ENCODE measurements at regions of chr15 and their contacts with region 1.

Region 1: DNA sequence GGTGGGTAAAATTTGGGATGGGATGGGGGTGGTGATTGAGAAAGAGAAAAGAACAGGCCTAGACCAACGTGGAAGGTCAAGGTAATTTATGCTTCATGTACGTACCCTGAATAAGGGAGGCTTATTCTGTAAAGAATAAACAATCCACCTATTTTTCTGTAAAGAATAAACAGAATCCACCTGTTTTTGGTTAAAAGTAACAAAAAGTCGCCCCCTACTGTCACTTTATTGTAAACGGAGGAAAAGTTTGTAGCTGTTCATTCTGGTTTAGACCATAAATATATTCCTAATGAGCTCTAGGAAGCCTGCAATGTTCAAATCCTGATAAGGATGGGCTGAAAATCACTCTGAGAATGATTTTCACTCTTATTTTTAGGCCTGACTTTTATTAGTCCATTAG is 23.5 kb upstream of the SQOR start:
- DNase-seq: no peak
- ATAC-seq: no peak
- H3K4me3 Mint-ChIP-seq: no peak overlapping the region
- H3K27ac Mint-ChIP-seq: no peak overlapping the region
- H3K4me1 Mint-ChIP-seq: peaks cover 9% of the 10 kb centered on the region
- H3K27me3 Mint-ChIP-seq: no peaks in the 10 kb centered on the region

Region 2: GRCh38 chr15:45429974-45430792 is 181.1 kb before region 1 on chr15:
- CTCF ChIA-PET with region 1: interaction called, 10 read pairs
- POLR2A ChIA-PET with region 1: no interaction called
- intact Hi-C with region 1: loop called in 1 of 2 experiments (anchors 1 kb)
- DNase-seq: peak; percentile 92
- ATAC-seq: peak; percentile 97
- H3K4me3 Mint-ChIP-seq: peak overlapping the region; percentile 56
- H3K27ac Mint-ChIP-seq: no peak overlapping the region
- H3K4me1 Mint-ChIP-seq: peaks cover 2% of the 10 kb centered on the region
- H3K27me3 Mint-ChIP-seq: peaks cover 7% of the 10 kb centered on the region

Region 3: GRCh38 chr15:45522328-45523160 is 88.8 kb before region 1 on chr15 and contains the start of gene SLC30A4:
- CTCF ChIA-PET with region 1: no interaction called
- POLR2A ChIA-PET with region 1: no interaction called
- intact Hi-C with region 1: loop called (anchors 1 kb)
- DNase-seq: peak; percentile 65
- ATAC-seq: peak; percentile 90
- H3K4me3 Mint-ChIP-seq: peak within 1 kb of the TSS; percentile 89
- H3K27ac Mint-ChIP-seq: peak within 1 kb of the TSS; percentile 67
- H3K4me1 Mint-ChIP-seq: peaks cover 17% of the 10 kb centered on the region
- H3K27me3 Mint-ChIP-seq: peaks cover 2% of the 10 kb centered on the region
- total RNA-seq, gene SLC30A4: 1.6 to 1.9 TPM

Region 4: GRCh38 chr15:45587095-45587860 is 24.0 kb before region 1 on chr15 and contains the start of gene BLOC1S6:
- CTCF ChIA-PET with region 1: interaction called, 33 read pairs
- POLR2A ChIA-PET with region 1: no interaction called
- intact Hi-C with region 1: no loop called
- DNase-seq: peak; percentile 91
- ATAC-seq: peak; percentile 81
- H3K4me3 Mint-ChIP-seq: peak within 1 kb of the TSS; percentile 94
- H3K27ac Mint-ChIP-seq: peak within 1 kb of the TSS; percentile 100
- H3K4me1 Mint-ChIP-seq: peaks cover 48% of the 10 kb centered on the region
- H3K27me3 Mint-ChIP-seq: no peaks in the 10 kb centered on the region
- total RNA-seq, gene BLOC1S6: 36.1 to 52.5 TPM

Region 5: GRCh38 chr15:45634442-45635190 is 23.3 kb after region 1 on chr15 and contains the start of gene SQOR:
- CTCF ChIA-PET with region 1: interaction called, 5 read pairs
- POLR2A ChIA-PET with region 1: no interaction called
- intact Hi-C with region 1: loop called in 1 of 2 experiments (anchors 2 kb)
- DNase-seq: peak; percentile 86
- ATAC-seq: peak; percentile 66
- H3K4me3 Mint-ChIP-seq: peak within 1 kb of the TSS; percentile 96
- H3K27ac Mint-ChIP-seq: peak within 1 kb of the TSS; percentile 90
- H3K4me1 Mint-ChIP-seq: peaks cover 32% of the 10 kb centered on the region
- H3K27me3 Mint-ChIP-seq: no peaks in the 10 kb centered on the region
- total RNA-seq, gene SQOR: 105 to 108 TPM

Measured in activated CD4-positive, alpha-beta T cell treated with anti-CD3 and anti-CD28 coated beads for 36 hours (primary cell).